ENCODE measurements at regions of chr21 and their contacts with region 1.

Region 1: GRCh38 chr21:34215911-34216717 is 142.7 kb downstream of the MRPS6 start:
- DNase-seq: no peak
- H3K4me3 ChIP-seq: no peak overlapping the region
- H3K27ac ChIP-seq: no peak overlapping the region
- H3K4me1 ChIP-seq: no peaks in the 10 kb centered on the region
- H3K27me3 ChIP-seq: no peaks in the 10 kb centered on the region
- CTCF ChIP-seq: no peak

Region 2: DNA sequence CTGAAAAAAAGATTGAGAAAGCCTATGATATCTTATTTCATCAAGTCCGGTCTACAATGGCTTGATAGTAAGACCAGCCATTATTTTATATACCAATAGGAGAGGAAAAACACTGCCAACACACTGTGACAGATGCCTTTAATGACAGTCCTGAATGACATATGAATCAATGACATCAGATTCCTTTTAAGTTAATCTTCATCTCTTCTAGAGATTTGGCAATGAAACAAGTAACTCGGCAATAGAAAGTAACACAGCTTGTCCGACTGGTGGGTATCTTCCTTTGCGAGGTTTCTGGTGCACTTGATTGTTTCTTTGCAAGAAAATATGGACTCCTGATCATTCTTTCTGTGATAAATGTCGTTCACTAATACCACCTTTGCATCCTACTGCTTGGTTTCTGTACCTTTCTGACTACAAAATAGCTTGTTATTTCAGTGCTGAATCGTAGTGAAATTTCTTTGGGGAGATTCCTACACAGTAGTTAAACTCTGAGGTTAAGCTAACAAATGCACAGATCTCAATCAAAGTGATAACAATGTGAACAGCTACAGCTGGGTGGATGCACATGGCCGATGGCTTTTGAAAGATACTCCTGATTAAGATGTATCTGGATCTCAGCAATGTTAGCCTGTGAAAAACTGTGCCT is 38.1 kb before region 1 on chr21:
- CTCF ChIA-PET with region 1: interaction called, 18 read pairs
- POLR2A ChIA-PET with region 1: no interaction called
- intact Hi-C with region 1: no loop called
- DNase-seq: no peak
- H3K4me3 ChIP-seq: no peak overlapping the region
- H3K27ac ChIP-seq: no peak overlapping the region
- H3K4me1 ChIP-seq: no peaks in the 10 kb centered on the region
- H3K27me3 ChIP-seq: no peaks in the 10 kb centered on the region
- CTCF ChIP-seq: no peak

Region 3: GRCh38 chr21:34243562-34243961 is 27.4 kb after region 1 on chr21:
- CTCF ChIA-PET with region 1: no interaction called
- POLR2A ChIA-PET with region 1: no interaction called
- intact Hi-C with region 1: no loop called
- DNase-seq: peak; percentile 65
- H3K4me3 ChIP-seq: no peak overlapping the region
- H3K27ac ChIP-seq: no peak overlapping the region
- H3K4me1 ChIP-seq: no peaks in the 10 kb centered on the region
- H3K27me3 ChIP-seq: peaks cover 7% of the 10 kb centered on the region
- CTCF ChIP-seq: peak; percentile 74

Region 4: GRCh38 chr21:34302521-34302920 is 86.4 kb after region 1 on chr21:
- CTCF ChIA-PET with region 1: no interaction called
- POLR2A ChIA-PET with region 1: no interaction called
- intact Hi-C with region 1: no loop called
- DNase-seq: no peak
- H3K4me3 ChIP-seq: no peak overlapping the region
- H3K27ac ChIP-seq: no peak overlapping the region
- H3K4me1 ChIP-seq: peaks cover 6% of the 10 kb centered on the region
- H3K27me3 ChIP-seq: peaks cover 40% of the 10 kb centered on the region
- CTCF ChIP-seq: no peak